CD8-positive, alpha-beta T cell (primary cell): ENCODE measurements at regions of chr1 and their contacts with region 1.

Region 1: GRCh38 chr1:115694805-115695204 is 53.0 kb downstream of the VANGL1 start:
- DNase-seq: no peak
- ATAC-seq: no peak
- H3K4me3 ChIP-seq: no peak overlapping the region
- H3K4me3 Mint-ChIP-seq: no peak overlapping the region
- H3K27ac ChIP-seq: no peak overlapping the region
- H3K27ac Mint-ChIP-seq: no peak overlapping the region
- H3K4me1 ChIP-seq: no peaks in the 10 kb centered on the region
- H3K4me1 Mint-ChIP-seq: no peaks in the 10 kb centered on the region
- H3K27me3 ChIP-seq: no peaks in the 10 kb centered on the region
- H3K27me3 Mint-ChIP-seq: no peaks in the 10 kb centered on the region
- CTCF ChIP-seq: no peak

Region 2: DNA sequence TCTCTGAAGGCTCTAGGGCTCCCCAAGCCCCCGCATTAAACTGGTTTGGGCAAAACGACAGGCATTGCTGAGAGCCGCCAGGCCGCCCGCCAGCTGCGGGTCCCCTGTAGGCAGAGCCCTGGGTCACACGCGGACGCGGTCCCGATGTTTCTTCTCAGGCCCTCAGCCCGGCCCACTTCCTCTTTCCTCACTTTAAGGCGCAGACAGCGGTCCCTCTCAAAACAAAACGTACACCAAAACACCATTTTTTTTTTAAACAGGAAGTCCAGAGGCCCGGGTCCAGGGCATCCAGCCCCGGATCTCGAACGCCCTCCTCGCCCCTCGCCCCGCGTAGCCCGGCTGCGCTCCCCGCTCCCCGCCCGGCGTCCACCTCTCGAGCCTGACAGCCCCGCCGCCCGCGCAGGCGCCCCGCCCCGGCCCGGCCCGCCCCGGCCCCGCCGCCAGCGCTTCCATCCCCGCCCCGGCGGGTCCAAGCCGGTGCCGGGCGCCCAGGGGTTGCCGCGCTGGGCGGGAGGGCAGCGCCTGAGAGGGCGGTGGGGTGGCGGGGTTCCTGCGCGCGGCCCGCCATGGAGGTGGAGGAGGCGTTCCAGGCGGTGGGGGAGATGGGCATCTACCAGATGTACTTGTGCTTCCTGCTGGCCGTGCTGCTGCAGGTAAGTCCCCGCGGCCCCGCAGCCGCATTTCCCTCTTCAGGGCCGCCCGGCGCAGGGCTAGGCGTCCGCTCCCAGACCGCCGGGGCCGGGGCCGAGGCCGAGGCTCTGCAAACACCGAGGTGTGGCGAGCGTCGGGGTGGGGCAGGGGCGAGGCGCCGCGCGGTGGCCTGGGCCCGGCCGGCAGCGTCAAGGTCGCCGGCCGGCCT is 281.5 kb after region 1 on chr1 and contains the start of gene SLC22A15:
- CTCF ChIA-PET with region 1: no interaction called
- POLR2A ChIA-PET with region 1: no interaction called
- intact Hi-C with region 1: no loop called
- DNase-seq: peak in 8 of 9 experiments; percentile 3 to 64 (median 32)
- ATAC-seq: peak; percentile 58
- H3K4me3 ChIP-seq: peak within 1 kb of the TSS; percentile 48 to 63
- H3K4me3 Mint-ChIP-seq: peak within 1 kb of the TSS; percentile 88
- H3K27ac ChIP-seq: peak within 1 kb of the TSS in 1 of 2 experiments; percentile 48
- H3K27ac Mint-ChIP-seq: peak within 1 kb of the TSS; percentile 46
- H3K4me1 ChIP-seq: peaks cover 3% of the 10 kb centered on the region
- H3K4me1 Mint-ChIP-seq: peaks cover 9% of the 10 kb centered on the region
- H3K27me3 ChIP-seq: peaks cover 0 to 2% of the 10 kb centered on the region in 2 experiments
- H3K27me3 Mint-ChIP-seq: peaks cover 56% of the 10 kb centered on the region
- CTCF ChIP-seq: no peak
- total RNA-seq, gene SLC22A15: 0.16 TPM in 1 of 2 experiments, not detected in the other

Region 3: DNA sequence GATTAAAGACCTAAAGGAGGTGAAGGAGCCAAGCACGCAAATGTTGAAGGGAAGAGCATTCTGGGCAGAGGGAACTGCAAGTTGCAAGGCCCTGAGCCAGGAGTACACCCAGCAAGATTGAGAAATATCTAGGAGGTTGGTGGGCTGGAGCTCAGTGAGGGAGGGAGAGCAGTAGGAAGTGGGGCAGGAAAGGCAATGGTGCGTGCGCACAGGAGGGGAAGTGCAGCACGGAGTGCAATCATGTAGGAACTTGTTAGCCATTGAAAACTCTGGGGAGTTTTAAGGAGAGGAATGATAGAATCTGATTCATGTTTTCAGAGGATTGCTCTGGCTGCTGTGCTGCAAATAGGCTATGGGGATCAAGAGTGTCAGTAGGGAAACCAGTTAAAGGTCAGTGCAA is 985.9 kb after region 1 on chr1:
- CTCF ChIA-PET with region 1: no interaction called
- POLR2A ChIA-PET with region 1: no interaction called
- intact Hi-C with region 1: loop called in 1 of 2 experiments (anchors 5 kb)
- DNase-seq: no peak
- ATAC-seq: no peak
- H3K4me3 ChIP-seq: no peak overlapping the region
- H3K4me3 Mint-ChIP-seq: no peak overlapping the region
- H3K27ac ChIP-seq: no peak overlapping the region
- H3K27ac Mint-ChIP-seq: no peak overlapping the region
- H3K4me1 ChIP-seq: no peaks in the 10 kb centered on the region
- H3K4me1 Mint-ChIP-seq: no peaks in the 10 kb centered on the region
- H3K27me3 ChIP-seq: peaks cover 0 to 4% of the 10 kb centered on the region in 2 experiments
- H3K27me3 Mint-ChIP-seq: peaks cover 13% of the 10 kb centered on the region
- CTCF ChIP-seq: no peak